Naive thymus-derived CD4-positive, alpha-beta T cell (primary cell): ENCODE measurements at regions of chr17 and their contacts with region 1.

Region 1: GRCh38 chr17:49851387-49852291 is 3.8 kb upstream of the TAC4 start:
- DNase-seq: peak; percentile 57 to 75 (median 67)
- ATAC-seq: peak; percentile 81
- H3K4me3 ChIP-seq: peak overlapping the region; percentile 67
- H3K4me3 Mint-ChIP-seq: peak overlapping the region; percentile 89 to 98 (median 94)
- H3K27ac ChIP-seq: peak overlapping the region; percentile 81
- H3K27ac Mint-ChIP-seq: peak overlapping the region; percentile 83 to 97 (median 95)
- H3K4me1 ChIP-seq: peaks cover 13 to 14% of the 10 kb centered on the region in 2 donors
- H3K4me1 Mint-ChIP-seq: peaks cover 10 to 30% (median 19%) of the 10 kb centered on the region in 7 donors
- H3K27me3 ChIP-seq: no peaks in the 10 kb centered on the region
- H3K27me3 Mint-ChIP-seq: peaks cover 0 to 9% (median 0%) of the 10 kb centered on the region in 5 donors

Region 2: GRCh38 chr17:49414622-49415350 is 436.9 kb before region 1 on chr17 and contains the start of gene PHB1:
- CTCF ChIA-PET with region 1: no interaction called
- POLR2A ChIA-PET with region 1: no interaction called
- intact Hi-C with region 1: loop called in 1 of 2 experiments (anchors 1 kb)
- DNase-seq: peak; percentile 75 to 98 (median 93)
- ATAC-seq: peak; percentile 99
- H3K4me3 ChIP-seq: peak within 1 kb of the TSS; percentile 77
- H3K4me3 Mint-ChIP-seq: peak within 1 kb of the TSS; percentile 92 to 99 (median 96)
- H3K27ac ChIP-seq: peak within 1 kb of the TSS; percentile 77
- H3K27ac Mint-ChIP-seq: peak within 1 kb of the TSS; percentile 78 to 99 (median 92)
- H3K4me1 ChIP-seq: peaks cover 8% of the 10 kb centered on the region in 2 donors
- H3K4me1 Mint-ChIP-seq: peaks cover 11 to 30% (median 26%) of the 10 kb centered on the region in 7 donors
- H3K27me3 ChIP-seq: no peaks in the 10 kb centered on the region
- H3K27me3 Mint-ChIP-seq: peaks cover 0 to 3% (median 0%) of the 10 kb centered on the region in 5 donors
- total RNA-seq, gene PHB1: 50.0 to 186 (median 54.4) TPM

Region 3: DNA sequence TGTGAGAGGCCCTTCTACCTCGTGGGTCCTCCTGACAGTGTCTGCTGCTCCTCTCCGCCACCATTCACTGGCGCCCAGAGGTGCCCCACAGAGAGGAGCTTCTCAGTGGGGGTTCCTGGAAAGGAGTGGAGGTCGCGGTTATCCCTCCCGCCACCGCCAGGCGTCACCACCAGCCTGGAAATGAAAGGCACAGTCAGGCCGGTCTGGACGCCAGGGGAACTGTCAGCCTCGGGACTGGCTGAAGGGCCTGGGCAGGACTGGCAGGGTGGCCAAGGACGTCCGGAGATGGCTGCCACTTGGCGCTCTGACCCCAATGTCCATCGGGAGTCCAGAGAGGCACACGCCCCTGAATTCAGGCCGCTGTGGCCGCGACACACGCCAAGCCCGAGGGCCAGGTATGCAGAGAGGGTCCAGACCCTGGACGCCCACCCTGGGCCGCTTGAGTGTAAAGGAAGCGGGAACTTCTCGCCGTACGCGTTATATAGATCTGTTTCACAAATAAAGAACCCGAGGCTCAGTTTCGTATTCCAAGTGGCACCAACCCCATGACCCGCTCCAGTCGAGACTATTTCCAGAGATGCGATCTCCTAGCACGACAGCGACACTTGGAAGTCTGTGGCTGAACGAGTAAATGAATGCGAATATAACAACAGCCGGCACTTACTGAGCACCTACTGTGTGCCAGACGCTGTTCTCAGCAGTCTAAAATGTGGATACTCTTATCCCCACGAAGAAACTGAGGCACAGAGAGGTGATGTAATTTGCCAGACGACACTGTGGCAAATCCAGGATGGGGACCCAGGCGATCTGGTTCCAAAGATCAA is 283.6 kb before region 1 on chr17:
- CTCF ChIA-PET with region 1: interaction called, 4 read pairs
- POLR2A ChIA-PET with region 1: no interaction called
- intact Hi-C with region 1: loop called (anchors 1 kb)
- DNase-seq: peak; percentile 50 to 88 (median 72)
- ATAC-seq: peak; percentile 64
- H3K4me3 ChIP-seq: peak overlapping the region; percentile 15
- H3K4me3 Mint-ChIP-seq: peak overlapping the region; percentile 53 to 80 (median 70)
- H3K27ac ChIP-seq: no peak overlapping the region
- H3K27ac Mint-ChIP-seq: peak overlapping the region in 1 of 9 donors; percentile 7
- H3K4me1 ChIP-seq: peaks cover 6 to 7% of the 10 kb centered on the region in 2 donors
- H3K4me1 Mint-ChIP-seq: peaks cover 0 to 28% (median 15%) of the 10 kb centered on the region in 7 donors
- H3K27me3 ChIP-seq: no peaks in the 10 kb centered on the region
- H3K27me3 Mint-ChIP-seq: peaks cover under 1 to 38% (median 4%) of the 10 kb centered on the region in 5 donors

Region 4: DNA sequence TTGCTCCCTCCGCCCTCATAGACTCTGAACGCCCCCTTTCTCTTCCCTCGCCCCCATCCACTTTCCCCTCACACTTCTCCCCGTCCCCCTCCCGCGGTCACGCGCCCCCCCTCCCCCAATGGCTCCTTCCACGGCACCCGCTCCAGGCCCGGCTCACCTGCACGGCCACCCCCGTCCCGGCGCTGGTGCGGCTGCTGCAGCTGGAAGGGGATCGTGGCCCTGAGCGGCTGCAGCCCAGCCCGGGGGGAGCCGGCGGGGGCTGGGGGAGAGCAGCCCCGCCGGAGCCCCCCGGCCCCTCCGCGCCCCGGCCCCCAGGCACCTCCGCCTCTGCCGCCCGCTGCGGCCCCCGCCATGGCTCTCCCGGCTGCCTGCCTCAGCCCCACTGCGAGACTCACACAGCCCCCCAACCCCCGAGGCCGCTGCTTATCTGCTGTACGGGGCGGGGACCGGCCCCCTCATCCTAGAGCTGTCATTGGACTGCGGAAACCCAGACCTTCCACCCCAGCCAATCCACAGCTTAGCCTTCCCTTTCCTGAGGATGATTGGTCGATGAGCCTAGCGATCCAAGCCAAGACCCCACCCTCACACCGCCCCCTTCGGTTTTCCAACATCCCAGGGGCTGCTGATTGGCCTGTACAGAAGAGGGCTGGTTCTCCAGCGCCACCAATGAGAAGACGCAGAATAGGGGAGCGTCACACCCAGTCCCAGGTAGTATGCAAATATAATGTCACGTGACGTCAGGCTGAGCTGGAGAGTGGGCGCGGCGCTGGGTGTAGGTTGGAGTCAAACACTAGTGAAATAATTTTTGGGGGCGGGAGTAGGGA is 87.7 kb before region 1 on chr17 and contains the start of gene FAM117A:
- CTCF ChIA-PET with region 1: no interaction called
- POLR2A ChIA-PET with region 1: no interaction called
- intact Hi-C with region 1: loop called in 1 of 2 experiments (anchors 1 kb)
- DNase-seq: peak; percentile 72 to 99 (median 98)
- ATAC-seq: peak; percentile 93
- H3K4me3 ChIP-seq: peak within 1 kb of the TSS; percentile 82
- H3K4me3 Mint-ChIP-seq: peak within 1 kb of the TSS; percentile 92 to 99 (median 96)
- H3K27ac ChIP-seq: peak within 1 kb of the TSS; percentile 65
- H3K27ac Mint-ChIP-seq: peak within 1 kb of the TSS; percentile 62 to 96 (median 93)
- H3K4me1 ChIP-seq: peaks cover 32 to 36% of the 10 kb centered on the region in 2 donors
- H3K4me1 Mint-ChIP-seq: peaks cover 35 to 52% (median 51%) of the 10 kb centered on the region in 7 donors
- H3K27me3 ChIP-seq: no peaks in the 10 kb centered on the region
- H3K27me3 Mint-ChIP-seq: peaks cover 0 to 35% (median 0%) of the 10 kb centered on the region in 5 donors
- total RNA-seq, gene FAM117A: 31.8 to 99.1 (median 58.5) TPM

Region 5: GRCh38 chr17:49815761-49816281 is 35.8 kb before region 1 on chr17:
- CTCF ChIA-PET with region 1: interaction called, 4 read pairs
- POLR2A ChIA-PET with region 1: interaction called, 9 read pairs
- intact Hi-C with region 1: loop called in 1 of 2 experiments (anchors 1 kb)
- DNase-seq: no peak
- ATAC-seq: no peak
- H3K4me3 ChIP-seq: no peak overlapping the region
- H3K4me3 Mint-ChIP-seq: peak overlapping the region in 5 of 10 donors; percentile 43 to 85 (median 67)
- H3K27ac ChIP-seq: peak overlapping the region; percentile 55
- H3K27ac Mint-ChIP-seq: peak overlapping the region; percentile 78 to 99 (median 96)
- H3K4me1 ChIP-seq: peaks cover 36 to 60% of the 10 kb centered on the region in 2 donors
- H3K4me1 Mint-ChIP-seq: peaks cover 32 to 79% (median 73%) of the 10 kb centered on the region in 7 donors
- H3K27me3 ChIP-seq: no peaks in the 10 kb centered on the region
- H3K27me3 Mint-ChIP-seq: no peaks in the 10 kb centered on the region

Region 6: DNA sequence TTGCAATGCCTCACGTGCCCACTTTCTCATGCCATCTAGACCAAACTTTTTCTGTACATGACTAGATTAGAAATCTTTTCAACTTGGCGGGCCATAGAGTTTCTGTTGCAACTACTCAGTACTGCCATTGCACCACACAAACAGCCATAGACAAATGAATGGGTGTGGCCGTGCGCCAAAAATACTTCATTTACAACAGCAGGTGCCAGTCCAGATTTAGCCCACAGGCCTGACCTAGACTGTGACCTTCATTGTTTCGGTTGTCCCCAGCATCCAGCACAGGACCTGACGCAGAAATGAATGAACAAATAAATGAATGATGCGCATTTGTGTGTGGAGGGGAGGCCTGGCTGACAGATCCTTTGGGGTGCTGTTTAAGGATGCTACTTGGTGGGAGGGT is 229.2 kb after region 1 on chr17:
- CTCF ChIA-PET with region 1: no interaction called
- POLR2A ChIA-PET with region 1: no interaction called
- intact Hi-C with region 1: no loop called
- DNase-seq: no peak
- ATAC-seq: no peak
- H3K4me3 ChIP-seq: no peak overlapping the region
- H3K4me3 Mint-ChIP-seq: no peak overlapping the region
- H3K27ac ChIP-seq: no peak overlapping the region
- H3K27ac Mint-ChIP-seq: no peak overlapping the region
- H3K4me1 ChIP-seq: no peaks in the 10 kb centered on the region
- H3K4me1 Mint-ChIP-seq: no peaks in the 10 kb centered on the region
- H3K27me3 ChIP-seq: no peaks in the 10 kb centered on the region
- H3K27me3 Mint-ChIP-seq: no peaks in the 10 kb centered on the region